Tibial artery (tissue), 4 donors: ENCODE measurements at regions of chr3 and their contacts with region 1.

Region 1: GRCh38 chr3:134600685-134601463 is 49.9 kb downstream of the KY start:
- DNase-seq: peak in 1 of 2 donors; percentile 43
- H3K4me3 ChIP-seq: peak overlapping the region in 1 of 2 donors; percentile 25
- H3K27ac ChIP-seq: no peak overlapping the region
- H3K4me1 ChIP-seq: peaks cover 0 to 10% (median 5%) of the 10 kb centered on the region in 4 donors
- H3K27me3 ChIP-seq: no peaks in the 10 kb centered on the region
- CTCF ChIP-seq: peak; percentile 83 to 99

Region 2: DNA sequence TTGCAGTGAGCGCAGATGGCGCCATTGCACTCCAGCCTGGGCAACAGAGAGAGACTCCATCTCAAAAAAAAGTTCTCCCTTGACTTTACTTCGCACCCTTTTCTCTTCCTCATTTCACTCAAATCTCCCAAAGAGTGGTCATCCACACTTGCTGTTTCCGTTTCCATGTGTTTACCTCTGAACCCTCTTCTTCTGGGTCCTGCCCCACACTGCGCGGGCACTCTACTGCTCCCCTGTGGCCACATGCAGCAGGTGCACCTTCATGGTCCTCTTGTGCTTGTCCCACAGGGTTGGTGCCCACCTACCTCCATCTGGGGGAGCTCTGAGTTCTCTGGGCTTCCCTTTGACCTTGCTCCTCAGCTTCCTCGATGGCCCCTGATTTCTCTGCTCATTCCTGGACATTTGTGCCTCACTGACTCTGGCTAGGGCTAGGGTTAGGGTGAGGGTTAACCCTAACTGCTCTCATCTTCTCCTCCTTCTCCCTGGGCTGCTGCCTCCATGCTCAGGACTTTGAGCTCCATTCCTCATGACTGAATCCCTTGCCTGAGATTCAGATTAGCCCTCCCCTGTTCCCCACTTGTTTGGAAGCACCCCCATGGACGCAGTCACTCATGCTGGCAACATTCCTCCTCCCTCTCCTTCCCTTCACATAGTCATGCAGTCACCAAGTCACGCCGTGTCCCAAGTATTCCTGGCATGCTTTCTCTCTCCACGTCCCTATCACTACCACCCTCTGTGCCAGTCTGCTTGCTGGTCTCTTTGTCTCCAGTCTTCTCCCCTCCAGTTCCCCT is 76.5 kb after region 1 on chr3:
- intact Hi-C with region 1: loop called (anchors 5 kb)
- DNase-seq: no peak
- H3K4me3 ChIP-seq: no peak overlapping the region
- H3K27ac ChIP-seq: no peak overlapping the region
- H3K4me1 ChIP-seq: peaks cover 0 to 10% (median 3%) of the 10 kb centered on the region in 4 donors
- H3K27me3 ChIP-seq: no peaks in the 10 kb centered on the region
- CTCF ChIP-seq: peak; percentile 56 to 65

Region 3: GRCh38 chr3:134772011-134772410 is 171.1 kb after region 1 on chr3:
- intact Hi-C with region 1: loop called (anchors 10 kb)
- DNase-seq: no peak
- H3K4me3 ChIP-seq: no peak overlapping the region
- H3K27ac ChIP-seq: no peak overlapping the region
- H3K4me1 ChIP-seq: no peaks in the 10 kb centered on the region
- H3K27me3 ChIP-seq: no peaks in the 10 kb centered on the region
- CTCF ChIP-seq: no peak

Region 4: DNA sequence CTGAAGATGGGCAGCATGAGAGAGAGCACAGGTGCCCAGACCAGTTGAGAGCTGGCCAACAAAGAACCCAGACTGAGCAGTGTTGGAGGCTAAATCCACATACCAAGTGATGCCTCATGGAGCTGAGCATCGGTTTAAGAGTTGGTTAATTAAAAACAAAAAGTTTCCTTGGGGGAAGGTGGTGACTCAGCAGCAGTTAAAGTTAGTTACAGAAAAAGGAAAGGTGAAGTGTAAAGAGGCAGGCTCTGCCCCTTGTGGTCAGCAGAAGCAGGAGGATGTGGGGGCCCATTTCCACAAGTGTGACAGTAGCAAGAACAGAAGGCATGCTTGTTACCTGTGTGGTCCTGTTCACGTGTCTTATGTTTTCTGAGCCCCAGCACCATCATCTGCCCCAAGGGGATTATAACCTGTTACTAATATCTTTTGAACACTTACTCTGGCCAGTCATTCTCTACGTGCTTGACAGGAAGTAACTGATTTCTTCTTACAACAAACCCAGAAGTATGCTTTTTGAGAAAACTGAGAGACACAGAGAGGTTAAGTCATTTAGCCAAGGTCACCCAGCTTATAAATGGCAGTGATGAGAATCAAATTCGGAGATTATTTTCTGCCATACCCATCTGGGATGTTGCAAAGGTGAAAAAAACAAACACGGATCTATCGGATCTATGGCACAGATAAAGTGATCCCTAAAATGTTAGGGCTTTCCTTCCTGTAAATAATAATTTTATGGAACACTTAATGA is 285.2 kb after region 1 on chr3:
- intact Hi-C with region 1: no loop called
- DNase-seq: no peak
- H3K4me3 ChIP-seq: no peak overlapping the region
- H3K27ac ChIP-seq: no peak overlapping the region
- H3K4me1 ChIP-seq: no peaks in the 10 kb centered on the region
- H3K27me3 ChIP-seq: no peaks in the 10 kb centered on the region
- CTCF ChIP-seq: no peak